Activated naive CD8-positive, alpha-beta T cell treated with anti-CD3 and anti-CD28 coated beads, Interleukin-2, amount 10 ng/mL, durations not matched to agents 7 days and 5 days (primary cell): ENCODE measurements at regions of chr22 and their contacts with region 1.

Region 1: GRCh38 chr22:38176170-38176741 is 5.4 kb downstream of the PLA2G6 start:
- DNase-seq: peak; percentile 35
- ATAC-seq: peak; percentile 26
- H3K4me3 Mint-ChIP-seq: peak overlapping the region; percentile 29
- H3K27ac Mint-ChIP-seq: peak overlapping the region; percentile 64
- H3K4me1 Mint-ChIP-seq: peaks cover 66% of the 10 kb centered on the region
- H3K27me3 Mint-ChIP-seq: no peaks in the 10 kb centered on the region

Region 2: DNA sequence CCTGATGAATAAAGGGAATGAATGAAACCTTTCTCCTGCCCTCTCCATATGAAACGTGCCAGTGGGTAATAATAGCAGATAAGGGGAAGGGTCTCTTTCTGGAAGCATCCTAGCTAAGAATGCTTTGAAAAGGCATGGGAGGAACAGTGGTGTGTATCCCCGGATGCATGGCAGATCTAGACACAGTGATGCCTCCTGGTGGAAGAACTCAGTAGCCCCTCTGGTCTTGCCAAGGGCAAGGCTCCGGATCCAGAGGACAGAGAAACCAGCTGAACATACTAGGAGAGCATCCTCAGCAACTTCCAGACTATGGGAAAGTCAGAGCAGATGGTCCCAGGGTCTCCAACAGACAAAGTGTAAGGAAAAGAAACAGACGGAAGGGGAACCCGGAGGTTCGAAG is 72.2 kb before region 1 on chr22:
- POLR2A ChIA-PET with region 1: no interaction called
- DNase-seq: no peak
- ATAC-seq: no peak
- H3K4me3 Mint-ChIP-seq: no peak overlapping the region
- H3K27ac Mint-ChIP-seq: no peak overlapping the region
- H3K4me1 Mint-ChIP-seq: peaks cover 17% of the 10 kb centered on the region
- H3K27me3 Mint-ChIP-seq: no peaks in the 10 kb centered on the region

Region 3: DNA sequence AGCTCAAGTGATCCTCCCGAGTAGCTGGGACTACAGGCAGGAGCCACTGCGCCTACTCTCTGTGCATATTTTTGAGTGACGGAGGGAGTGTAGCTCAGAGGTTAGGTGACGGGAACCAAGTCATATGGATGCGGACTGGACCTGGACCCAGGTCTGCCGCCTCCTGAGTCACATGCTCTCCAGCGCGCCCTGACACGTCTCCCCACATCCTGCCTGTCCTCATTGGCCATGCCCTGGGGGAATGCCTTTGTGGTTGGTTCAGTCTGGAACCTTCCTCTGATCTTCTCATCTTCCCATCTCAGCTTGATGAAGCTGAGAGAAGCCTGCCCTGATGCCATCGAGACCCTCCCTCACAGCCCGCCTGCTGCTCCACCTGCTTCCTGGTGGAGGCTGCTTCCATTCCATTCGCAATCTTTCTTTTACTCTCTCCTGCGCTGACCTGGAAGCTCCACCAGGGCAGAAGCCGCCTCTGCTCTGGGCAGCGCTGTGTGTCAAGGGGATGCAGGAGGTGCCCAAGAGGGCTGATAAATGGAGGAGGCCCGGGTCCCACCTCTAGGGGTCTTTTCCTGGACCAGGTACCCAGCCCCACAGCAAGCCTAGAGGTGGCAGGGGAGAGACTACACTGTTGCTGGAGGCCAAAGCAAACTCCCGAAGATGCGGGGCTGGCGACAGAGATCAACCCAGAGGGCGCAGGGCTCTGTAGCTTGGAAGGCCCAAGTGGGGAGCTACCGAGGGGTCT is 51.9 kb before region 1 on chr22:
- POLR2A ChIA-PET with region 1: no interaction called
- DNase-seq: no peak
- ATAC-seq: no peak
- H3K4me3 Mint-ChIP-seq: no peak overlapping the region
- H3K27ac Mint-ChIP-seq: no peak overlapping the region
- H3K4me1 Mint-ChIP-seq: peaks cover 11% of the 10 kb centered on the region
- H3K27me3 Mint-ChIP-seq: no peaks in the 10 kb centered on the region

Region 4: DNA sequence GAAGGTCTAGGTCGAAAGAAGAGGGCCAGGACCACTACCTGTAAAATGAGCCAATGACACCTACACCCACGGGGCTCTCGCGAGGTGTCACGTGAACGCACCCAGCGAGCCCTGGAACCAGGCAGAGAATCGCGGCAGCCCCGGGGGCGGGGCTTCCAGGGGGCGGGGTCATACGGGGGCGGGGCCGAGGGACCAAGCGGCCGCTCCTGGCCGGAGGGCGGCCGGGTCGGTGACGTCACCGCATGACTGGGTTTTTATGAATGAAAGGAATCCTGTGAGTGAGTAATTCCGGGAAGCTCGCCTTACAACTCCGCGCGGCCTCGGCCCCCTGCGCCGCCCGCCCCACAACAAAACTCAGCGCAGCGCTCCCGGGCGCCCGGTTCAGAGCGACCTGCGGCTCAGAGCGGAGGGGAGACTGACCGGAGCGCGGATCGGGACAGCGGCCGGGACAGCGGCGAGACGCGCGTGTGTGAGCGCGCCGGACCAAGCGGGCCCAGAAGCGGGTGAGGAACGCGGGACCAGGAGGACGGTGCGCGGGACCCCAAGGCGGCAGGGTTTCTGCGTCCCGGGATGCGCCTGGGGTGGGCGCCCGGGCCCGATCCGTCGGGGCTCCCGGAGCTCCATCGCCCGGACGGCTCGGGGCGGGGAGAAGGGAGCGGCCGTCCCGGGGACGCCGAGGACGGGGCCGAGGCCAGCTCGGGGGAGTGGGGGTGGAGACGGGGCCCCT is 25.6 kb after region 1 on chr22 and contains the start of gene MAFF:
- POLR2A ChIA-PET with region 1: interaction called, 78 read pairs
- DNase-seq: peak; percentile 90
- ATAC-seq: peak; percentile 72
- H3K4me3 Mint-ChIP-seq: peak within 1 kb of the TSS; percentile 90
- H3K27ac Mint-ChIP-seq: peak within 1 kb of the TSS; percentile 98
- H3K4me1 Mint-ChIP-seq: peaks cover 34% of the 10 kb centered on the region
- H3K27me3 Mint-ChIP-seq: no peaks in the 10 kb centered on the region
- total RNA-seq, gene MAFF: 10.8 to 12.8 TPM